ENCODE measurements at regions of chr4 and their contacts with region 1.

Region 1: DNA sequence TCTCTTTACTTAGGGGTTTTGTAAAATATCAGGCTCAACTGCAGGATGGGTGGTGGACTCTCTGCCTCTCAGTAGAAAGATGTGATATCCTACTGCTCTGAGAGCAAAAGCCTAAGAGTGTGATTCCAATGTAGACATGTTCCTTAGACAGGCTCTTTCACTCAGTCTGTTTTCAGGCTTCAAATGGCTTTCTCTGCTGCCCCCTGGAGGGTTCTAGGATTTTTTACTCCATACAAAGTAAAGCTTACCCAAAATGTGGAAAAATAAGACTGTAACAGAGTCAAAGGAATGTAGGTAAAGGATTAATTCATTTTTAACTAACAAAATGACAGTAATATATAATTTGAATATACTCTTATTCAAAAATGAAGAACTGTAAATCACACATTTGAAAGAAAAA is 32.1 kb downstream of the ZGRF1 start:
- DNase-seq: peak; percentile 18
- H3K4me3 Mint-ChIP-seq: no peak overlapping the region
- H3K27ac Mint-ChIP-seq: no peak overlapping the region
- H3K4me1 Mint-ChIP-seq: no peaks in the 10 kb centered on the region
- H3K27me3 Mint-ChIP-seq: no peaks in the 10 kb centered on the region

Region 2: DNA sequence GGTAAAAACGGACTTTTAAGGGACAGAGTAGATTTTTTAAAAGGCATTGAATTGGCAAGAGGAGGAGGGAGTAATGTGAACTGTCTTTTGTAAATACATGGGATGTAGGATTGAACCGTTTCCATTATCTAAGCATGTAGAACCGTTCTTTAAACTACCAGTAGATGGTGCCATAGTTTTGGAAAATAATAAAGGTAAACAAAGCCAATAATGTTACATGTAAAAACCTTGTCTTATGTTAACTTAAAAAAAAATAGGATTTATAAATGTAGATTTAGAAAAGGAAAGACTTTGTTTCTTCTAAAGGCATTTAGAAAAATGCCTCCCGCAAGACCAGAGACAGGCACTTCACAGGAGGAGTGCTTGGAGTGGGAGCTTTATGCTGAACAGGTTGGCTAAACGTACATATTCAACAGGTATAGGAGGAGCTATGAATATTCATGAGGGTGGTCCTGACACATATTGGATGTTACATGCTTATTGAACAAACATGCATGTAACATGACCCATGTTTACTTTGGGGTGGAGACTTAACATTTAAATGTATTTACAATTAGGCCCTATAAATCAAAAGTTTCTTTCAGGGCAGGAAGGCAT is 504.8 kb before region 1 on chr4:
- CTCF ChIA-PET with region 1: interaction called, 7 read pairs
- POLR2A ChIA-PET with region 1: no interaction called
- intact Hi-C with region 1: loop called (anchors 10 kb)
- DNase-seq: no peak
- H3K4me3 Mint-ChIP-seq: no peak overlapping the region
- H3K27ac Mint-ChIP-seq: no peak overlapping the region
- H3K4me1 Mint-ChIP-seq: peaks cover 1% of the 10 kb centered on the region
- H3K27me3 Mint-ChIP-seq: peaks cover 2% of the 10 kb centered on the region

Region 3: DNA sequence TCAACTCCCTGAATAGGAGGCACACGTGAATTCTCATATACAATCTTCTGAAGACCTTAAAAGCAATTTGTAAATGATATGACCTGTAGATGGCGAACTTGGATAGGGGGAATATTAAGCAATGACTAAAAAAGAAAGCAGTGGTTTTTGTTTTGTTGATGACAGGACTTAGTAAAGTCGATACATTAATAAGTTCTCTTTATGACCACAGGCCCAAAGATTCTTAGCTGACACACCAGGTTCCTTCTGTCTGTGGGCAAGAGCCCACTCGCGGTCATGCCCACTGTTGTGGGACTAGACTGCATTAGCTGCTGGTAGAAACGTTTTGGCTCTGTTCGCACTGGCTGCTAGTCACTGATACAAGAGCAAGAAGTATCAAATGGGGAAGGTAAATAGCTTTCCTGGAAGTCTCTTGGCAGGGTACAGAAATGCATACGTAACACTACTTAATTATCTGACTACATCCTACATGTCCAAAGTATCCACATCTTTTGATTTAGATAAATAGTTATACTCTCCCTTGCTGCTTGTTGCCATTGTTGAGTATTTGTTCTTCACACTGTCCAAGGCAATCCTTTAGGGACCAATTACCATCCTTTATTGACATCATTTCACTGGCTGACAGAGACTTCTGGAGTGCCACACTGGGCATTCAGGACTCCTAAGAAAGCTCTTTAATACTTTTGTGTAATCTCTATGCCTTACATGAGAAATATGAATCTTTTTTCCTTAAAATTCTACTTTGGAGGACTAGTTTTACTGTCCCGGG is 276.4 kb before region 1 on chr4:
- CTCF ChIA-PET with region 1: interaction called, 7 read pairs
- POLR2A ChIA-PET with region 1: no interaction called
- intact Hi-C with region 1: loop called (anchors 1 kb)
- DNase-seq: peak; percentile 24
- H3K4me3 Mint-ChIP-seq: no peak overlapping the region
- H3K27ac Mint-ChIP-seq: no peak overlapping the region
- H3K4me1 Mint-ChIP-seq: peaks cover 5% of the 10 kb centered on the region
- H3K27me3 Mint-ChIP-seq: no peaks in the 10 kb centered on the region

Measured in activated CD4-positive, alpha-beta memory T cell treated with anti-CD3 and anti-CD28 coated beads for 36 hours (primary cell).